ENCODE measurements at regions of chr13 and their contacts with region 1.

Region 1: DNA sequence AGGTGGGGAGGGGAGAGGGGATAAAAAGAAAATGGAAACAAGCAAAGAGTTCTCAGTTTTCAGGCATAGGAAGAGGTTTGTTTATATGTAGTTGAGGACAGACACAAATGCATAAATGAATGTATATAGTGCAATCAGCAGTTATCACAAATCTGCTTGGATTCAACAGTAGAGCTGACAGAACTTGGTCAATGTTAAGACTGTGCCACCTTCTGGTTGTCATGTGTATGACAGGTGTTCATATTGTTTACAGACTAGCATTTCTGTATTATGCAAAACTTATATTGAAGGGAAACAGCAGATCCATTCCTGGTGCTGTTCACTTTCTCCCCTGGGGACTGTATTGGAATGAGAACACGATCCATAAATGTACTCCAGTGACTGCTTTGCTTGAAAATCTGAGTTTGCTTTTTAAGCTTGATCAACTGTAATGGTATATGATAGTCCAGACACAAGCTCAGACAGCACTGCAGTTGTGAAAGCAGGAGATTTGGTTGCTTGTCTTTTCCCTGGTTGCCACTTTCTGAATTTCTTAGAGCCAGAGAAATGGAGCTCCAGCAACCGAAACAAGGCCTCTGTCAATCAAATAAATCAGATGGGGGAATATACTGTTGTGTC is 319.5 kb upstream of the OBI1 start:
- DNase-seq: peak in 9 of 14 experiments; percentile 5 to 64 (median 14)
- ATAC-seq: peak; percentile 55
- H3K4me3 ChIP-seq: no peak overlapping the region
- H3K4me3 Mint-ChIP-seq: no peak overlapping the region
- H3K27ac ChIP-seq: no peak overlapping the region
- H3K27ac Mint-ChIP-seq: no peak overlapping the region
- H3K4me1 ChIP-seq: no peaks in the 10 kb centered on the region
- H3K4me1 Mint-ChIP-seq: no peaks in the 10 kb centered on the region
- H3K27me3 ChIP-seq: peaks cover 0 to 6% of the 10 kb centered on the region in 2 experiments
- H3K27me3 Mint-ChIP-seq: peaks cover 32% of the 10 kb centered on the region
- CTCF ChIP-seq: peak; percentile 78

Region 2: GRCh38 chr13:77779552-77780272 is 1198.8 kb before region 1 on chr13:
- CTCF ChIA-PET with region 1: no interaction called
- POLR2A ChIA-PET with region 1: no interaction called
- intact Hi-C with region 1: loop called in 1 of 2 experiments (anchors 5 kb)
- DNase-seq: peak in 4 of 14 experiments; percentile 29 to 63 (median 54)
- ATAC-seq: no peak
- H3K4me3 ChIP-seq: no peak overlapping the region
- H3K4me3 Mint-ChIP-seq: no peak overlapping the region
- H3K27ac ChIP-seq: no peak overlapping the region
- H3K27ac Mint-ChIP-seq: no peak overlapping the region
- H3K4me1 ChIP-seq: peaks cover 4% of the 10 kb centered on the region
- H3K4me1 Mint-ChIP-seq: peaks cover 11% of the 10 kb centered on the region
- H3K27me3 ChIP-seq: no peaks in the 10 kb centered on the region
- H3K27me3 Mint-ChIP-seq: no peaks in the 10 kb centered on the region
- CTCF ChIP-seq: peak; percentile 78

Region 3: DNA sequence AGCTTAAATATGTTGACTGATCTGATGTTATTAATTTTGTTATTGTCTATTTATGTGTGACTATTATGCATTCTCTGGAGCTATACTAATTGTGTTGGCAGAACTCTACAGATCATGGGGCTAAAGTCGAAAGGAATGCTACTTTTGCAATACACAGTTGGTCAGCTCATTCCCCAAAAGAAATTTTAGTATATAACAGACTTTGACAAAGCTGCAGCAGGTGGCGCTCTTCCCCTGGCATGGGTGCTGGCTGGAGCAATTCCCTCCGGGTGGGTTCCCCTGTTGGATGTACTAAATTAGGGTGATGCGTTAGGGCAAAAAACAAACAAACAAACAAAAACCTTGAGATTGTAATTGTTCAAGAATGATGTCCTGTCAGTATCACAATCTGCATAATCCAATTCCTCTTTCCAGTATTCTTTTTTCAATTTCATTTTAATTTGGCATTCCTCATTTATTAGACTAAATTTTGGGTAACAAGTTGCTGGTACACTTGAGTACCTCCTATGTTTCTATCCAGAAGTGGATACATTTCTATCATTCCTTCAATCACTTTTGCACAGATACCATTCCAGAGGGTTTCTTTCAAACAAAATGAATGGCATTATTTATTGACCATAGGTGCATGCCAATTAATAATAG is 737.1 kb before region 1 on chr13:
- CTCF ChIA-PET with region 1: no interaction called
- POLR2A ChIA-PET with region 1: no interaction called
- intact Hi-C with region 1: loop called (anchors 5 to 10 kb)
- DNase-seq: peak in 2 of 14 experiments; percentile 7 to 12
- ATAC-seq: no peak
- H3K4me3 ChIP-seq: no peak overlapping the region
- H3K4me3 Mint-ChIP-seq: no peak overlapping the region
- H3K27ac ChIP-seq: no peak overlapping the region
- H3K27ac Mint-ChIP-seq: no peak overlapping the region
- H3K4me1 ChIP-seq: no peaks in the 10 kb centered on the region
- H3K4me1 Mint-ChIP-seq: no peaks in the 10 kb centered on the region
- H3K27me3 ChIP-seq: no peaks in the 10 kb centered on the region
- H3K27me3 Mint-ChIP-seq: peaks cover 2% of the 10 kb centered on the region
- CTCF ChIP-seq: no peak

Region 4: GRCh38 chr13:79413521-79413920 is 435.0 kb after region 1 on chr13:
- CTCF ChIA-PET with region 1: no interaction called
- POLR2A ChIA-PET with region 1: no interaction called
- intact Hi-C with region 1: loop called in 1 of 2 experiments (anchors 10 kb)
- DNase-seq: no peak
- ATAC-seq: no peak
- H3K4me3 ChIP-seq: no peak overlapping the region
- H3K4me3 Mint-ChIP-seq: no peak overlapping the region
- H3K27ac ChIP-seq: no peak overlapping the region
- H3K27ac Mint-ChIP-seq: no peak overlapping the region
- H3K4me1 ChIP-seq: no peaks in the 10 kb centered on the region
- H3K4me1 Mint-ChIP-seq: peaks cover 8% of the 10 kb centered on the region
- H3K27me3 ChIP-seq: no peaks in the 10 kb centered on the region
- H3K27me3 Mint-ChIP-seq: no peaks in the 10 kb centered on the region
- CTCF ChIP-seq: no peak

Measured in CD4-positive, alpha-beta T cell (primary cell).